ENCODE measurements at regions of chr19 and their contacts with region 1.

Region 1: GRCh38 chr19:11446652-11447301 is 11.3 kb downstream of the PRKCSH start:
- DNase-seq: peak; percentile 85

Region 2: GRCh38 chr19:11137542-11138384 is 309.0 kb before region 1 on chr19:
- intact Hi-C with region 1: loop called in 1 of 2 experiments (anchors 10 kb)
- DNase-seq: peak; percentile 94

Region 3: DNA sequence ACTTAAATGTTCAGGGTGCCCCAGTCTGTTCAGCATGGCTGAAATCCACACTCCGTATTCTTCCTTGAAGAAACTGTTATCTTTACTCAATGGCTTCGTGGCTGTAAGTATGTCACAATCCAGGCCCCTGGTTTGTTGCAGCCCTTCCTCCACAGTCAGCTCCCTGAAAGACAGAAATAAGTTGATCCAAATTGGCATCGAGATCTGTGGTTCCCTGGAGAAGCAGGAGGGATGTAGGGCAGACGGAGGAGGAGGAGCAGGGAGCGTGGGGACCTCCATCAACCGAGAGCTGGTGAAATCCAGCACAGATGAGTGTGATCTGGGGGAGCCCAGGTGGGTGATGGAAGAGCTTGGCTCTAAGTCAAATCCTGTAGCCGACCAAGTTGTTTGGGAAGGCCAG is 150.5 kb before region 1 on chr19:
- intact Hi-C with region 1: loop called (anchors 1 to 5 kb)
- DNase-seq: no peak

Region 4: DNA sequence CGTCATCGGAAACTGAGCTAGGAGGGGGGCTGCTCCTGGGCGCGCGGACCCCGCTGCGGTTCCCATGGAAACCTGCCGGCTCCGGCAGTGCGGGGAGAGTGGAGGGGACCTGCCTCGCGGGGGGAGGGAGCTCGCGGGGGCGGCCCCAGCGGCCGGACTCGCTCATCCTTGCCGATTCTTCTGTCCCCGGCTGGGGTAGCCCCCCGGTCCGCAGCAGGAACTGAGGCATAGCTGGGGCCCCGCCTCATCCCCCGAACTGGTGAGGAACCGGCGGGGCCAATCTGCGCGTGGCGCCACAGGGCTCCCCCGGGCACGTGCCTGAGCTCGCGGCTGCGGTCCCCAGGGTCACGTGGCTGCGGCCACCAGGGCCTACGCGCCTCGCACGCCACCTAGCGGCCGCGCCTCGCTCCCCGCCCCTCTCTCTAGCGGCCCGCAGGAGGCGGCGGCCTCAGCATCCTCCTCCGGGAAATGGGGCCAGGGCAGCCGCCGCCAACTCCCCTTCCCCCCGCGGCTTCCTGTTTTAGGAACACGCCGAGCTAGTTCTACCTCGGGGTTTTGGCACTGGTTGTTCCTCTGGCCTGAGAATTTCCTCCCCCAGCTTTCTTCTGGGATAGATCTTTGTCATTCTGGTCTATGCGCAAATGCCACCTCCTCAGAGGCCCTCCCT is 35.7 kb after region 1 on chr19:
- intact Hi-C with region 1: loop called in 1 of 2 experiments (anchors 2 kb)
- DNase-seq: peak; percentile 97